Activated CD4-positive, alpha-beta T cell treated with anti-CD3 and anti-CD28 coated beads for 36 hours (primary cell): ENCODE measurements at regions of chr2 and their contacts with region 1.

Region 1: GRCh38 chr2:238288650-238289573 is 502 bp upstream of the PER2 start:
- DNase-seq: peak; percentile 98
- ATAC-seq: peak; percentile 86
- H3K4me3 Mint-ChIP-seq: peak overlapping the region; percentile 74
- H3K27ac Mint-ChIP-seq: peak overlapping the region; percentile 82
- H3K4me1 Mint-ChIP-seq: peaks cover 32% of the 10 kb centered on the region
- H3K27me3 Mint-ChIP-seq: no peaks in the 10 kb centered on the region

Region 2: DNA sequence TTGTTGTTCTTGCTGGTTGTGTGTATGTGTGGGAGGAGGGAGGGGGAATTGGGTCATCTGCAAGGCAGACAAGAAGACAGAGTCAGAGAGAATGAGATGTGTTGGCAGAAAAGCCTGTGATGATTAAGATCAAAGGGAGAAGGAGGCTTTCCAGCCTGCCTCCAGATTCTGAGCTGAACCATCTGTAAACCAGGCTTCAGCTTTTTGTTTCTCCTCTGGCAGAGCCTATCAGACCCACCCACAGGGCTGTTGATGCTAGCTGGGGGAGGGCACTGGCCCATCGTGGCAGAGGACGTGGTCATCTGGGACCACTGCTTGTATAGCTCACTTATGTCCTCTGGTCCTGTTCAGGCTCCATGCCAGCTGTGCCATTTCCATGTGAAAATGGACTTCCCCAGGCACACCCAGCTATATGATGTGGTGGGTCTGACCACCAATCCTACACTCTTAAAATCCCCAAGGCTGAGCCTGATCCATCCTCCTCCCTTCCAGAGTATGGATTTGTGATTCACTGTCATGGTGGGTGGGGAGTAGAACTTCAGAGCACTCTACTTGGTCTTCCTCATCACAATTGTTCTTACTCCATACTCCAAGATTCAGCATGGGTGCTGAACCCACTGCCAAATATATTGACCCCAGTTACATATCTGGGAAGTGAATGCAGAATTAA is 847.2 kb before region 1 on chr2:
- CTCF ChIA-PET with region 1: no interaction called
- POLR2A ChIA-PET with region 1: no interaction called
- intact Hi-C with region 1: loop called in 1 of 2 experiments (anchors 2 kb)
- DNase-seq: peak; percentile 69
- ATAC-seq: peak; percentile 71
- H3K4me3 Mint-ChIP-seq: peak overlapping the region; percentile 50
- H3K27ac Mint-ChIP-seq: peak overlapping the region; percentile 96
- H3K4me1 Mint-ChIP-seq: peaks cover 82% of the 10 kb centered on the region
- H3K27me3 Mint-ChIP-seq: no peaks in the 10 kb centered on the region

Region 3: GRCh38 chr2:237966565-237967462 is 322.1 kb before region 1 on chr2 and contains the start of gene UBE2F:
- CTCF ChIA-PET with region 1: no interaction called
- POLR2A ChIA-PET with region 1: no interaction called
- intact Hi-C with region 1: loop called (anchors 1 to 5 kb)
- DNase-seq: peak; percentile 98
- ATAC-seq: peak; percentile 95
- H3K4me3 Mint-ChIP-seq: peak within 1 kb of the TSS; percentile 78
- H3K27ac Mint-ChIP-seq: peak within 1 kb of the TSS; percentile 88
- H3K4me1 Mint-ChIP-seq: peaks cover 38% of the 10 kb centered on the region
- H3K27me3 Mint-ChIP-seq: no peaks in the 10 kb centered on the region
- total RNA-seq, gene UBE2F: 59.2 to 75.5 TPM

Region 4: DNA sequence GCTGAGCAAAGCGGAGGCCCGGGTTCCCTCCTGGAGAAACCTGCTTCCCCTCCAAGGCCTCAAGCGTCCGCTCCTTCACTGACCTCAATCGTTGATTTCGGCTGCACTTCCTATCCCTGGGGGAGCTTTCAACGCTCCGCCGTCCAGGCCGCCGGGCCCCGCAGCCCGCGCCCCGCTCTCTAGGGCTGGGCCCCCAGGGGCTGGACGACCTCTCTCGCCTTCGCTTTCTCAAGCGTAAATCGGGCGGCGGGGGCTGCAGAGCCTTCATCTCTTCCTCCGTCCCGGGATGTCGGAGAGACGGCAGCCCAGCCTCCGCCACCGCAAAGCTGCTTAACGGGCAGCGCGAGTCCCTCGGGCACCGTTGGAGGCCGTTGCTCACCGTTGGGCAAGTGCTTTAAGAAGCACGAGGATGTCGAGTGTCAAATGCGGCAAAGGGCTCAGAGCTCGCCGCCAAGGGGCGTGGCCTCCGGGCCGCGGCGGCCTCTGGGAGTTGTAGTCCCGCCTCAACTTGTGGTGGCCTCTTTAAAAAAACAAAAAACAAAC is 57.6 kb before region 1 on chr2:
- CTCF ChIA-PET with region 1: no interaction called
- POLR2A ChIA-PET with region 1: no interaction called
- intact Hi-C with region 1: loop called in 1 of 2 experiments (anchors 1 kb)
- DNase-seq: peak; percentile 89
- ATAC-seq: peak; percentile 90
- H3K4me3 Mint-ChIP-seq: peak overlapping the region; percentile 74
- H3K27ac Mint-ChIP-seq: peak overlapping the region; percentile 62
- H3K4me1 Mint-ChIP-seq: peaks cover 23% of the 10 kb centered on the region
- H3K27me3 Mint-ChIP-seq: peaks cover 14% of the 10 kb centered on the region

Region 5: DNA sequence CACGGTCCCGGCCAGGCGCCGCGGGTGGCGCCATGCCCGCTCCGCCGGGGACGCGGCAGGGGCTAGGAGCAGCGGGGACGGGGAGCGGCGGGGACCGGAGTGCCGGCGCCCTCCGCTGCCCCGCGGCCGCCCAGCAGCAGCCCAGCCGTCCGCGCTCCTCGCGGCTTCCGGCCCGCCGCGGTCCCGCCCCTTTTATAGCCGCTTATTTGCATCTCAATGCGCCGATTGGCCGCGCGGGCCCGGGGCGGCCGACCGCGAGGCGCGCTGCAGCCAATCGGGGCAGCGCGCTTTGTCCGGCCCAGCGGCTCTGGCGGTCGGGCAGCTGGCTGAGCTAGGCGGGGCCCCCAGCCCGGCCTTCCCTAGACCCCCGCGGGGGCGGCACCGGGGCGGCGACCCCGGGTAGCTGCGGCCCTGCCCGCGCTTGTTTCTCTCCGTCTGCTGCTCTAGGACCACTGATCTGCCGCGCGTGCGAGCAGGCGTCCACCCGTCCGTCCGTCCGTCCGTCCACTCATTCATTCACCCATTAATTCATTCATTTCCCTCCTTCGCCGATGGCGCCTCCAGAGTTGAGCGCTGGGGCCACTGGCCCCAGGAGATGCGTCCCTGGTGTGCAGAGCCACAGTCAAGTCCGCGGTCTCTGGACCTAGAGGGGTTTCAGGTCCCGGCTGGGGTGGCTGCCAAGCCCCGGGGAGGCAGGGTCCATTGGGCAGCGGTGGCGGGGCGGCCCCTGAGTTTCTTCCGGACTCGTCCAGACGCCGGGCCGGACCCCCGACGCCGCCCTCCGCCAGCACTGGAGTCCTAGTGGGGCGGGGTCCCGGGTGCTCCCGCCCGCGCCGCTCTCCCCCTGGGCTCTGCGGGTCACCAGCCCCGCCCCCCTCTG is 48.8 kb before region 1 on chr2 and contains the start of gene HES6:
- CTCF ChIA-PET with region 1: no interaction called
- POLR2A ChIA-PET with region 1: interaction called, 4 read pairs
- intact Hi-C with region 1: loop called in 1 of 2 experiments (anchors 2 kb)
- DNase-seq: peak; percentile 87
- ATAC-seq: peak; percentile 86
- H3K4me3 Mint-ChIP-seq: peak within 1 kb of the TSS; percentile 77
- H3K27ac Mint-ChIP-seq: no peak within 1 kb of the TSS
- H3K4me1 Mint-ChIP-seq: peaks cover 5% of the 10 kb centered on the region
- H3K27me3 Mint-ChIP-seq: peaks cover 21% of the 10 kb centered on the region
- total RNA-seq, gene HES6: 1.8 to 4.0 TPM

Region 6: DNA sequence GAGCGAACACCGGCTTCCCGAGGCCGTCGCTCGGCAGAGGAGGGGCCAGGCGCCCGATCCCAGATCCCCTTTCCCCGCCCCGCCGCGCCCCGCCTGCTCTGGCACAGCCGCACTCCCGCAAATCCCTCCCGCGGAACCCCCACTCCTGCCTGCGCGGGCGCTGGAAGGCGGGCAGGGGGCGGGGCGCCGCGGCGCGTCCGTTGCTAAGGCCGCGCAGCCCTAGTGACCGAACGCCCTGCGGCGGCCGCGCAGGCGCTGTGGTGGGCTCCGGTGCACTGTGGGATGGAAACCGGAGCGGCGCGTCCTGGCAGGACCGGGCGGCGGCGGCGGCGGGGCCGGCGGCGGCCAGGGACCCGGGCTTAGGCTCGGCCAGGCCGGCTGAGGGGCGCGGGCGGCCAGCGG is 31.3 kb after region 1 on chr2 and contains the start of gene TRAF3IP1:
- CTCF ChIA-PET with region 1: no interaction called
- POLR2A ChIA-PET with region 1: no interaction called
- intact Hi-C with region 1: loop called (anchors 1 kb)
- DNase-seq: peak; percentile 91
- ATAC-seq: peak; percentile 96
- H3K4me3 Mint-ChIP-seq: peak within 1 kb of the TSS; percentile 70
- H3K27ac Mint-ChIP-seq: no peak within 1 kb of the TSS
- H3K4me1 Mint-ChIP-seq: peaks cover 23% of the 10 kb centered on the region
- H3K27me3 Mint-ChIP-seq: peaks cover 3% of the 10 kb centered on the region
- total RNA-seq, gene TRAF3IP1: 8.5 to 9.8 TPM

Region 7: DNA sequence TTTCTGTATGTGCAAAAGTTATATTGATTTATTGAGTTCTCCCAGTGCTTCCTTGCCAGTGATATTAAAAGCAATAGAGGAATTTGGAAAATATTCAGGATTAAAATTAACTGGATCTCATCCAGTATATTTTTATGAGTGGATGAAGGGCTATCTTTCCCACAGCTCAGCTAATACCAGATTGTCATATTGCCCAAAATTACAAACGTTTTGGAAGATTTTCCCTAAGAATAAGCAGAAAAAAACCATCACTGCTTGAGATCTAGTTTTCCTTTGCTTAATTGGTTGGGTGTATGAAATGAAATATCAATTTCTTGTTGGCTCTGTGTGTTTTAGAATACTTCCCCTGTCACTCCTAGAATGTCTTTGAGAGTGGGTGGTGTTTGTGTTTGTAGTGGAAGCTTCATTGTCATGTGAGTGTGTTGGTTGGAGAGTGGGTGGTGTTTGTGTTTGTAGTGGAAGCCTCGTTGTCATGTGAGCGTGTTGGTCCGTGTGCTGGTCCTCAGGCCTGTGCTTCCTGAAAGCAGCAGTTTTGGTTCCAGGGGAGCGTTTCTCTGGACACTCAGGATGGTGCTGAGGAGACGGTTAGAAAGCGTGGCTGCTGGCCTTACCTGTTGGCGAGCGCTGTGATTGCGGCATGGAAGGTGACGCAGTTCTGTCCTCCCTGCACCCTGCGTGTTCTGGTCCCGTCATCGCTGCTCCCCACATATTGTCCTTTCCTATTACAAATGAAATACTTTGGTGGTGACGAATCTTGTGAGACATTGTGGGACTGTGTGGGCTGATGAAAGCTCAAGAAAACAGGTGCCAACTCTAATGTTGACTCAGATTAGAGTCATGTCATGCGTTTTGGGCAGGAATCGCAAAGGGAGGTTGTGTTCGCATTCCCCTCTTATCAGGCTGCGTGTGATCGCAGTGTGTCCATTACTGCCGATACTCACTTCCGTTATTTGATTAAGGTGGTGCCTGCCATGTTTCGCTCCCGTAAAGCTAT is 150.2 kb after region 1 on chr2:
- CTCF ChIA-PET with region 1: no interaction called
- POLR2A ChIA-PET with region 1: interaction called, 4 read pairs
- intact Hi-C with region 1: loop called in 1 of 2 experiments (anchors 1 kb)
- DNase-seq: peak; percentile 84
- ATAC-seq: peak; percentile 93
- H3K4me3 Mint-ChIP-seq: peak overlapping the region; percentile 55
- H3K27ac Mint-ChIP-seq: peak overlapping the region; percentile 80
- H3K4me1 Mint-ChIP-seq: peaks cover 47% of the 10 kb centered on the region
- H3K27me3 Mint-ChIP-seq: no peaks in the 10 kb centered on the region